Mucosa of descending colon (tissue), 3 donors: ENCODE measurements at regions of chr13 and their contacts with region 1.

Region 1: DNA sequence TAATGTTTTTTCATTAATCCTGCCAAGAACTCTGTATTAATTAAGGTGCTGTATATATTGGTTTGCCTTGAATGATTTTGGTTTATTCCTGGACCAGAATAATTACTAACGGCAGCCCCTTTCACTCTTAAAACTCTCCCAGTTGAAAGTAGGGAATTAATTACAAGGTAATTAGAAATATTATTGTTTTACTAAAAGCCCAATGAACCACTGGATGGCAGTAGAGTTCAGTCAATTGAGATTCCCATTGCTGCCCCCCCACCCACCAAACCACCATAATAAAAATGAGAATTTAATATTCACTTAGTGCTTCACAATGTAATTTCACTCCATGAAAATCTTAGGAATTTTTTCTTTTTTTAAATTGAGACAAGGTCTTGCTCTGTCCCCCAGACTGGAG is 13.7 kb downstream of the WBP4 start:
- DNase-seq: peak in 1 of 3 donors; percentile 49
- ATAC-seq: no peak
- H3K4me3 ChIP-seq: no peak overlapping the region
- H3K4me1 ChIP-seq: no peaks in the 10 kb centered on the region
- CTCF ChIP-seq: peak; percentile 10

Region 2: DNA sequence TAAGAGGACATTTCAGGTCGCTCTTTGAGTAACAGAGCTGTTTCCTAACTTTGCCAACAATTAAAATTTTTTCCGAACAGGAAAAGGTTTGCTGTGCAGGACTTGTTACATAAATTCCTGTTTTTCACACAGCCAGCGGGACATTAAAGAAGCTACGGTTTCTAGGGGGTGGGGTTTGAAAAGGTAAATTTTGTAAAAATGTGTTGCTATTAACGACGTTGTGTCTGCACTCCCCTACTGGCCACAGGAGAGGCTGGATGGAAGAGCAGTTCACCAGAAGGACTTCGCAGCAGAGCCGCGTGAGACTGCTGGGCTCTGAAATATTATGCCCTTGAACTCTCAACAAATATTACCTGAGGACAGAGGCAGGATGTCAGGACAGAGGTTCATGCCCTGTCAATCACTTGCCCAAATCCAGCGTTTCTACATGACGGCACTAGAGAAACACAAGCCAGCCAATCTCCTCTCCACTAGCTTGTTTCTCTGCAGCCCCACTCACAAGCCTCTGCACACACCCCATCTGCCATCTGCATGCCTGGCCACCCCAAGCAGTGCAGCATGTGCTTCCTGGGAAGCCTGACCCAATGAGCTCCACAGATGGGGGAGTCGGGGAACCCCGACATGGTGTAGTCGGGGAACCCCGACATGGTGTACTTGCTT is 510.6 kb before region 1 on chr13:
- intact Hi-C with region 1: no loop called
- DNase-seq: no peak
- ATAC-seq: no peak
- H3K4me3 ChIP-seq: no peak overlapping the region
- H3K4me1 ChIP-seq: peaks cover 18% of the 10 kb centered on the region
- CTCF ChIP-seq: no peak

Region 3: GRCh38 chr13:41222259-41222852 is 147.3 kb after region 1 on chr13:
- intact Hi-C with region 1: loop called in 1 of 2 experiments (anchors 10 kb)
- DNase-seq: peak in 1 of 3 donors; percentile 82
- ATAC-seq: peak; percentile 90
- H3K4me3 ChIP-seq: no peak overlapping the region
- H3K4me1 ChIP-seq: no peaks in the 10 kb centered on the region
- CTCF ChIP-seq: peak; percentile 56